ENCODE measurements at regions of chr19 and their contacts with region 1.

Region 1: DNA sequence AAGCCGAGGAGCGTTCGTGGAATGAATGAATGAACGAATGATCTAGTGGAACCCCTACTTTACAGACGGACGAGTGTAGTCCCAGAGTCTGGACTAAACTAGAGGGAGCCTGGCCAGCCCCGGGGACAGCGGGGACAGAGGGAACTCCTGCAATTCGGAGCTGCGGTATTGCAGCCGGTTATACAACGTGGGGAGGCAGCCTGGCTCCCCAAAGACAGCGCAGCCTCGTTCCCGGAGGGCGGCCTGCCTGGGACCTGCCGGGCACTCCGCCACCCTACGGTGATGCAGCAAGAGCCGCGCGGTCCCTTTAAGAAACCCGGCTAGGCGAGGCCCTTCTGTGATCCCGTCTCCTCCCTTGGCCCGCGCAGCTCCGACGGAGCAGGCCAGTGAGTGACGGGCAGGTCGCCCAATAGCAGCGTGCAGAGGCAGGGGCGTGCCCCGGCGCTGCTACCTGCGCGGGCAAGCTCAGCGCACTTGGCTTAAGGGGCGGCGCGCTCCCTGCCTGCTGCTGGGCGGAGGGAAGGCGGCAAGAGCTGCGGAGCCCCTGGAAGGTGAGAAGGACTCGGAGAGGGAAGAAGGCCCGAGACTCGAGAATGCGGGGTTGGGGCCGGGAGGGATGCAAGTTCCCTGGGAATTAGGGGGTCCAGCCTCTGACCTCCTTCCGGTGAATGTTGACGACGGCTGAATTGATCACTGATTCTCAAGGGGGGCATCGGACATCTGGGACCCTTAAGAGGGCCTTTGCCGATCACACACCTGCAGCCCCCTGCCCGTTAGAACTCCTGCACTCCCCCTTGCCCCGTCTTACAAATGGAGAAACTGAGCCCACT is at the start of gene ABCA7:
- DNase-seq: peak; percentile 100
- H3K4me3 Mint-ChIP-seq: peak within 1 kb of the TSS; percentile 94
- H3K27ac Mint-ChIP-seq: peak within 1 kb of the TSS; percentile 65
- H3K4me1 Mint-ChIP-seq: peaks cover 41% of the 10 kb centered on the region
- H3K27me3 Mint-ChIP-seq: no peaks in the 10 kb centered on the region
- total RNA-seq, gene ABCA7: 24.4 to 30.1 TPM

Region 2: DNA sequence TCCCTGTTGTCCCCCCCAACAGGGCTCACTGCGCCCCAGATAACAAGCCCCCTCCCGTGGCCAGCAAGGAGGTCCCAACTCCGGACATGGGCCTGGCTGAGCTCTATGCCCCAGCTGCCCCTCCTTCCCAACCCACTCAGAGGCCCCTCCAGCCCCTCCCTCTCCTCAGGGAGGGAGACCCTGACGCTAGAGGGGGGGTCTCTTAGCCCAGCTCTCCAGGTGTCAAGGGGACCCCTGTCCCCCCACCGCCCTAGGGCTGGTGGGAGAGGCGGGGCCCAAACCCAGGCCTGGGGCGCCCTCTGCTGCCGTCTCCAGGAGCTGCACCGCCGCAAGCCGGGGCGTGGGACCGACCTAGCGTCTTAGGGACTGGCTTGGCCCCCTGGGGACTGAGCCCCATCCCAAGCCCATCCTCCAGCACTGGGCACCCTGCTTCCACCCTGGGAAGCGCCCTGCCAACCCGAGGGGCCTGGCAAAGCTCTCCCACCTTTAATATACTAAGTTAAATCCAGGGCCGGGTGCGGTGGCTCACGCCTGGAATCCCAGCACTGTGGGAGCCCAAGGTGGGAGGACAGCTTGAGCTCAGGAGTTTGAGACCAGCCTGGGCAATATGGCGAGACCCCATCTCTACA is 38.2 kb before region 1 on chr19:
- CTCF ChIA-PET with region 1: no interaction called
- intact Hi-C with region 1: no loop called
- DNase-seq: peak; percentile 73
- H3K4me3 Mint-ChIP-seq: no peak overlapping the region
- H3K27ac Mint-ChIP-seq: no peak overlapping the region
- H3K4me1 Mint-ChIP-seq: peaks cover 7% of the 10 kb centered on the region
- H3K27me3 Mint-ChIP-seq: peaks cover 29% of the 10 kb centered on the region

Region 3: GRCh38 chr19:1026189-1027019 is 13.5 kb before region 1 on chr19 and contains the start of gene CNN2:
- CTCF ChIA-PET with region 1: interaction called, 4 read pairs
- intact Hi-C with region 1: loop called (anchors 1 kb)
- DNase-seq: peak; percentile 76
- H3K4me3 Mint-ChIP-seq: peak within 1 kb of the TSS; percentile 89
- H3K27ac Mint-ChIP-seq: peak within 1 kb of the TSS; percentile 89
- H3K4me1 Mint-ChIP-seq: peaks cover 23% of the 10 kb centered on the region
- H3K27me3 Mint-ChIP-seq: no peaks in the 10 kb centered on the region
- total RNA-seq, gene CNN2: 104 TPM

Region 4: GRCh38 chr19:1094975-1095701 is 55.3 kb after region 1 on chr19 and contains the start of gene POLR2E:
- CTCF ChIA-PET with region 1: no interaction called
- intact Hi-C with region 1: loop called (anchors 2 kb)
- DNase-seq: peak; percentile 99
- H3K4me3 Mint-ChIP-seq: peak within 1 kb of the TSS; percentile 92
- H3K27ac Mint-ChIP-seq: peak within 1 kb of the TSS; percentile 92
- H3K4me1 Mint-ChIP-seq: peaks cover 65% of the 10 kb centered on the region
- H3K27me3 Mint-ChIP-seq: no peaks in the 10 kb centered on the region
- total RNA-seq, gene POLR2E: 238 to 258 TPM

Region 5: GRCh38 chr19:1168877-1169791 is 129.3 kb after region 1 on chr19:
- CTCF ChIA-PET with region 1: no interaction called
- intact Hi-C with region 1: no loop called
- DNase-seq: no peak
- H3K4me3 Mint-ChIP-seq: no peak overlapping the region
- H3K27ac Mint-ChIP-seq: no peak overlapping the region
- H3K4me1 Mint-ChIP-seq: peaks cover 28% of the 10 kb centered on the region
- H3K27me3 Mint-ChIP-seq: no peaks in the 10 kb centered on the region

Measured in activated naive CD4-positive, alpha-beta T cell treated with anti-CD3 and anti-CD28 coated beads for 36 hours (primary cell).